ENCODE measurements at regions of chr5 and their contacts with region 1.

Region 1: GRCh38 chr5:57221049-57221568 is 47.2 kb downstream of the GPBP1 start:
- DNase-seq: no peak
- H3K4me3 Mint-ChIP-seq: no peak overlapping the region
- H3K27ac Mint-ChIP-seq: peak overlapping the region; percentile 68
- H3K4me1 Mint-ChIP-seq: peaks cover 48% of the 10 kb centered on the region
- H3K27me3 Mint-ChIP-seq: no peaks in the 10 kb centered on the region

Region 2: GRCh38 chr5:56900858-56901578 is 320.1 kb before region 1 on chr5:
- CTCF ChIA-PET with region 1: interaction called, 11 read pairs
- intact Hi-C with region 1: loop called (anchors 1 kb)
- DNase-seq: peak; percentile 46
- H3K4me3 Mint-ChIP-seq: no peak overlapping the region
- H3K27ac Mint-ChIP-seq: no peak overlapping the region
- H3K4me1 Mint-ChIP-seq: peaks cover 2% of the 10 kb centered on the region
- H3K27me3 Mint-ChIP-seq: no peaks in the 10 kb centered on the region

Region 3: DNA sequence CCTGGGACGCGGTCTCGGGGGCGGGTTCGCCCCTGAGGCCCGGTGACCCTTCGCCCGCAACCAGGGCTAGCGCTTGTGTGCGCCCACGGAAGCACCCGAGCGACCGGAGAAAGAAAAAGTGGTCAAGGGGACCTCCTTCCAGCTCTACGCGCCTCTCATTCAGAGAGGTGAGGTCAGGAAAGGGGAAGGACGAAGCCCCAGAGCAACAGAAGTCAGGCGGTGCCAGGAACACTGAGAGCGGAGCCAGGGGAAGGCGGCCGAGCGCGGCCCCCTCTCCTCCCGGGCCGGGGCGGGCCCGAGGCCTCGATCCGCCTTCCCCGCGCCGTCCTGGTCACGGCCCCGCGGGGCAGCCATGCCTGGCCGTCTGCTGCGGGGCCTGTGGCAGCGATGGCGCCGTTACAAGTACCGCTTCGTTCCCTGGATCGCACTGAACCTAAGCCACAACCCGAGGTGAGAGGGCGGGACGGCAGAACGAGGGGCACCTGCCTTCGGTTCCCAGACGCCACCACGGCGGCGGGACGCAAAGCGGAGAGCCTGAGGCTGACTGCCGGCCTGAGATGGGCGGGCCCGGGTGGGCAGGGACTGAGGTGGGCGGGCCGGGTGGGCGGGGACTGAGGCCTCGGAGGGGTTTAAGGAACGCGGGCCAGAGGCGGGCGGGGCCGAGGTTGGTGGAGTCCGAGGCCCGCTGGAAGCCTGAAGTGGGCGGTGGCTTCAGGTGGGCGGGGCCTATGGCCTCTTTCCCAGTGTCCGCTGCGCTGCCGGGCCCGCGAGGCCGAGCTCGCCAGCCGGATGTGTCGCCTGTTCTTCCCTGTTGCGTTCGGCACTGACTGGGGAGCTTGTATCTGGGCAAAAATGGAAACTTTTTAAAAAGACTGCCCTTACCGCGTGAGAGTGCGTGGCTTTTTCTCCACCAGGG is 311.6 kb before region 1 on chr5 and contains the start of gene SETD9:
- CTCF ChIA-PET with region 1: interaction called, 4 read pairs
- intact Hi-C with region 1: loop called (anchors 2 kb)
- DNase-seq: peak; percentile 97
- H3K4me3 Mint-ChIP-seq: peak within 1 kb of the TSS; percentile 81
- H3K27ac Mint-ChIP-seq: peak within 1 kb of the TSS; percentile 94
- H3K4me1 Mint-ChIP-seq: peaks cover 19% of the 10 kb centered on the region
- H3K27me3 Mint-ChIP-seq: no peaks in the 10 kb centered on the region
- total RNA-seq, gene SETD9: 5.8 to 8.6 TPM

Region 4: DNA sequence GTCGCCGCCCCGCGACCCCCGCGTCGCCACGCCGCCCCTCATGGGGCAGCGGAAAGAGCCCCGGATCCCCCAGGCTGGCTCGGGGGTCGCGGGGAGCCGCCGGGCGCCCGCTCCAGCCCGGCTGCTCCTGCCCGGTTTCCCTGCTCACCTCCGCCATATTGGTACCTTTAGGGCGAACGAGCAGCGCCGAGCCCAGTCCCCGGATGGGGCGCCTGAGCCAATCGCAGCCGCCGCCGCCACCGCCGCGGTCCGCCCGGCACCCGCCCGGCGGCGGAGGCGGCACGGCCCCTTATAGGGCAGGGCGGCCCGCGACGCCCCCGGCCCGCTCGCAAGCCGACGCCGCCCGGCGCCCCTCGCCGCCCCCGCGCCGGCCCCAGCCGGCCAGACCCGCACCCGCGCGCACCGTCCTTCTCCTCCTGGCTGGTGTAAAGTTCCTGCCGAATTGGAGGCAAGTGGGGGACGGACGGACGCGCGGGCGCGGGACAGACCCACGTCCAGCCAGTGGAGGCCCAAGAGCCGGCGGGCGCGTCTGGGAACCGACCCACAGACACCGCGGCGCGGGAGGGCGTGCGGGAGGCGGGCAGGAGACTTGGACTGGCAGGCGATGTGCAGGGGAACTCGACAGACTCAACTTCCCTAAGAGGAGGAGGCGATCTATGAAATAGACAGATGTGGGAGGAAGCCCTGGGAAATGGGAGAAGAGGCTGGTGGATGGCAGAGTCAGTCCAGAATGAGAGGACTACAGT is 269.0 kb before region 1 on chr5 and contains the start of gene MIER3:
- CTCF ChIA-PET with region 1: interaction called, 3 read pairs
- intact Hi-C with region 1: loop called (anchors 2 kb)
- DNase-seq: peak; percentile 83
- H3K4me3 Mint-ChIP-seq: peak within 1 kb of the TSS; percentile 85
- H3K27ac Mint-ChIP-seq: peak within 1 kb of the TSS; percentile 9
- H3K4me1 Mint-ChIP-seq: peaks cover 20% of the 10 kb centered on the region
- H3K27me3 Mint-ChIP-seq: peaks cover 10% of the 10 kb centered on the region
- total RNA-seq, gene MIER3: 11.1 to 12.3 TPM

Region 5: GRCh38 chr5:57137401-57137800 is 83.7 kb before region 1 on chr5:
- CTCF ChIA-PET with region 1: interaction called, 29 read pairs
- intact Hi-C with region 1: loop called (anchors 1 kb)
- DNase-seq: no peak
- H3K4me3 Mint-ChIP-seq: no peak overlapping the region
- H3K27ac Mint-ChIP-seq: no peak overlapping the region
- H3K4me1 Mint-ChIP-seq: no peaks in the 10 kb centered on the region
- H3K27me3 Mint-ChIP-seq: no peaks in the 10 kb centered on the region

Region 6: DNA sequence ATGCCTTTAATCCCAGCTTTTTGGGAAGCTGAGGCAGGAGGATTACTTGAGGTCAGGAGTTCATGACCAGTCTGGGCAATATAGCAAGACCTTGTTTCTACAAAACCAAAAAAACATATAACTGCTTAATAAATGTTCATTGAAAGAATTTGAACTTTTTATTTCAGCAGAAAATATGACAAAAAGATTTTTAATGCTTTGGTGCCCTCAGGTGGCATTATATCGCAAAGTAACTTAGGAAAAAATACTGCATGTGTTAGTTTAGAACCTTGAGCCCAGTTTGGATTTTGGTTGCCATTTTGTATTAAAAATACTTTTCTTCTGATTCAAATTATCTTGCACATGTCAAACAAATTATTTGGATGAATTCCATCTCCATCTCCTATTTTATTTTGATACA is 56.0 kb after region 1 on chr5:
- CTCF ChIA-PET with region 1: no interaction called
- intact Hi-C with region 1: loop called (anchors 5 kb)
- DNase-seq: no peak
- H3K4me3 Mint-ChIP-seq: no peak overlapping the region
- H3K27ac Mint-ChIP-seq: no peak overlapping the region
- H3K4me1 Mint-ChIP-seq: no peaks in the 10 kb centered on the region
- H3K27me3 Mint-ChIP-seq: peaks cover 6% of the 10 kb centered on the region